GM12878 (cell line): ENCODE measurements at regions of chr14 and their contacts with region 1.

Region 1: GRCh38 chr14:66624299-66624937 is 116.5 kb downstream of the GPHN start:
- DNase-seq: peak; percentile 21
- ATAC-seq: peak; percentile 98
- H3K4me3 ChIP-seq: no peak overlapping the region
- H3K27ac ChIP-seq: no peak overlapping the region
- H3K4me1 ChIP-seq: no peaks in the 10 kb centered on the region
- H3K27me3 ChIP-seq: no peaks in the 10 kb centered on the region
- CTCF ChIP-seq: peak; percentile 64 to 72 (median 67); a peak in 5 of 6 replicates
- EP300 ChIP-seq: no peak
- POLR2A ChIP-seq: no peak
- RAD21 ChIP-seq: peak; percentile 93

Region 2: DNA sequence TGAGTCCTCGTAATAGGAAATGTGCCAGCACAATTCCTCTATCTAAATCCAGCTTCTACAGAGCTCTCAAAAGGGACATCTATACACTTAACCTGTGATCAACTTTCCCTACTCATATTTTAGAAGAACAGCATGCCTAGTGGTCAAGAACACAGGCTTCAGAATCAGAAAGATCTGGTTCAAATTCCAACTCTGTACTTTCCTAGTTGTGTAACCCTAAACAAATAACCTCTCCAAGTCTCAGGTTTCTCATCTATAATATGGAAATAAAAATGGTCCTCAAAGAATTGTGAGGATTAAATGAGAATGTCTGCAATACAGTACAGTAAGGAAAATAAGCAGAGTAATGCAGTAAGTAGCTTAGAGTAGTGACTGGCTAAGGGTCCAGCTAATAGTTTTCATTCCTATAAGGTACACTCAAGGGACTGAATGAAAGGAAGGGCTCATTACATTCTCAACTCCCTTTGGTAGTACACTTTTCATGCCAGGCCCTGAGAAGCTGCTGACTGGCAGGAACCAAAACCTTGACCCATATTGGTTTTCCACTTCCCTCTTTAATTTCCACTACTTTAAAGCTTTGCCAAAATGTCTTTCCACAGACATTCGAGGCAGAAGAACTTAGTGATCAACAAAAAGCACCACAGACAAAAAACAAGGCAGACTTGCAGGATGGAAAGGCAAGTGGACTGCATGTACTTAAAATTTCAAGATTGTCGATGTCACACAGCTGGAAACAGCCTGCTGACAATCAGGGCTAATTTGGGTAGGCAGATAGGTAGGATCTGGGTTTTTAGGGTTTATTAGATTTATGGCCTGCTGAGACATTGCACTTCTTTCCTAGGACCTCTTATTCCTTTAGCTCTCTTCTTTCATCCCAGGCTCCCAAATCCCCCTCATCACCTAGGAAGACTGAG is 134.0 kb before region 1 on chr14:
- CTCF ChIA-PET with region 1: interaction called, 24 read pairs
- POLR2A ChIA-PET with region 1: interaction called, 8 read pairs
- RAD21 ChIA-PET with region 1: interaction called, 10 read pairs
- SMC1A ChIA-PET with region 1: interaction called, 5 read pairs
- in situ Hi-C with region 1: no loop called
- intact Hi-C with region 1: loop called (anchors 2 kb)
- DNase-seq: no peak
- ATAC-seq: no peak
- H3K4me3 ChIP-seq: no peak overlapping the region
- H3K27ac ChIP-seq: no peak overlapping the region
- H3K4me1 ChIP-seq: no peaks in the 10 kb centered on the region
- H3K27me3 ChIP-seq: no peaks in the 10 kb centered on the region
- CTCF ChIP-seq: no peak
- EP300 ChIP-seq: no peak
- POLR2A ChIP-seq: no peak
- RAD21 ChIP-seq: no peak

Region 3: GRCh38 chr14:66507722-66508546 is 116.5 kb before region 1 on chr14 and contains the start of gene GPHN:
- CTCF ChIA-PET with region 1: interaction called, 6 read pairs
- POLR2A ChIA-PET with region 1: no interaction called
- RAD21 ChIA-PET with region 1: interaction called, 10 read pairs
- SMC1A ChIA-PET with region 1: interaction called, 8 read pairs
- in situ Hi-C with region 1: no loop called
- intact Hi-C with region 1: no loop called
- DNase-seq: peak; percentile 95
- ATAC-seq: peak; percentile 91
- H3K4me3 ChIP-seq: peak within 1 kb of the TSS; percentile 95
- H3K27ac ChIP-seq: peak within 1 kb of the TSS; percentile 87
- H3K4me1 ChIP-seq: peaks cover 4% of the 10 kb centered on the region
- H3K27me3 ChIP-seq: no peaks in the 10 kb centered on the region
- CTCF ChIP-seq: peak; percentile 15 to 23 (median 20); a peak in 4 of 6 replicates
- EP300 ChIP-seq: 0 out of 4 replicates have a peak, but pooled peaks of 1 of the 2 experiments have one; percentile 13
- POLR2A ChIP-seq: peak; percentile 95
- RAD21 ChIP-seq: no peak
- polyA plus RNA-seq, gene GPHN: 32.3 to 33.1 TPM

Region 4: DNA sequence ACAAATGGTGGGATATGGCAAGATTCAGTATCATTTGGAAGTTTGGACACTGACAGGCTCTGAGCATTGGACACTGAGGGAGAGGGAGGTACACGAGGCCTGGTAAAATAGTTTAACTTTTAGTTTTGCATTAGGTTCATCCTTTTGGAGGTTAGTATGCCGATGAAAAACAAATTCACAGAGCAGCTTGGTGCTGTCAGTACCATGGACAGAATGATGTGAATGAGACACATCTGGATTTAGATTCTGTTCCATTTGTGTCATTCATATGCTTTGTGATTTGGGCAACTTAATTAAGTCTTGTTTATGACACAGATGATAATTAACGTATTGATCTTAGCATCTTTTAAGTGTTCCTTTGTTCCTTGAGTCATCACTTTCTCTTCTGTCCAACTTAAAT is 82.8 kb before region 1 on chr14:
- CTCF ChIA-PET with region 1: no interaction called
- POLR2A ChIA-PET with region 1: no interaction called
- RAD21 ChIA-PET with region 1: no interaction called
- SMC1A ChIA-PET with region 1: no interaction called
- in situ Hi-C with region 1: no loop called
- intact Hi-C with region 1: no loop called
- DNase-seq: no peak
- ATAC-seq: no peak
- H3K4me3 ChIP-seq: no peak overlapping the region
- H3K27ac ChIP-seq: no peak overlapping the region
- H3K4me1 ChIP-seq: no peaks in the 10 kb centered on the region
- H3K27me3 ChIP-seq: no peaks in the 10 kb centered on the region
- CTCF ChIP-seq: no peak
- EP300 ChIP-seq: no peak
- POLR2A ChIP-seq: no peak
- RAD21 ChIP-seq: no peak

Region 5: GRCh38 chr14:66649498-66649897 is 25.1 kb after region 1 on chr14:
- CTCF ChIA-PET with region 1: interaction called, 11 read pairs
- POLR2A ChIA-PET with region 1: interaction called, 3 read pairs
- RAD21 ChIA-PET with region 1: interaction called, 12 read pairs
- SMC1A ChIA-PET with region 1: interaction called, 17 read pairs
- in situ Hi-C with region 1: no loop called
- intact Hi-C with region 1: no loop called
- DNase-seq: peak; percentile 79
- ATAC-seq: peak; percentile 82
- H3K4me3 ChIP-seq: peak overlapping the region; percentile 54
- H3K27ac ChIP-seq: peak overlapping the region; percentile 96
- H3K4me1 ChIP-seq: peaks cover 36% of the 10 kb centered on the region
- H3K27me3 ChIP-seq: no peaks in the 10 kb centered on the region
- CTCF ChIP-seq: no peak
- EP300 ChIP-seq: peak; percentile 83 to 90
- POLR2A ChIP-seq: no peak
- RAD21 ChIP-seq: no peak

Region 6: GRCh38 chr14:66746316-66747006 is 122.0 kb after region 1 on chr14:
- CTCF ChIA-PET with region 1: interaction called, 47 read pairs
- POLR2A ChIA-PET with region 1: no interaction called
- RAD21 ChIA-PET with region 1: interaction called, 11 read pairs
- SMC1A ChIA-PET with region 1: interaction called, 30 read pairs
- in situ Hi-C with region 1: no loop called
- intact Hi-C with region 1: loop called (anchors 1 kb)
- DNase-seq: no peak
- ATAC-seq: peak; percentile 80
- H3K4me3 ChIP-seq: no peak overlapping the region
- H3K27ac ChIP-seq: no peak overlapping the region
- H3K4me1 ChIP-seq: no peaks in the 10 kb centered on the region
- H3K27me3 ChIP-seq: no peaks in the 10 kb centered on the region
- CTCF ChIP-seq: peak; percentile 40 to 53 (median 43)
- EP300 ChIP-seq: no peak
- POLR2A ChIP-seq: no peak
- RAD21 ChIP-seq: peak; percentile 59

Region 7: GRCh38 chr14:67111022-67111421 is 486.6 kb after region 1 on chr14:
- CTCF ChIA-PET with region 1: interaction called, 13 read pairs
- POLR2A ChIA-PET with region 1: no interaction called
- RAD21 ChIA-PET with region 1: interaction called, 7 read pairs
- SMC1A ChIA-PET with region 1: no interaction called
- in situ Hi-C with region 1: no loop called
- intact Hi-C with region 1: no loop called
- DNase-seq: no peak
- ATAC-seq: no peak
- H3K4me3 ChIP-seq: no peak overlapping the region
- H3K27ac ChIP-seq: no peak overlapping the region
- H3K4me1 ChIP-seq: no peaks in the 10 kb centered on the region
- H3K27me3 ChIP-seq: no peaks in the 10 kb centered on the region
- CTCF ChIP-seq: no peak
- EP300 ChIP-seq: no peak
- POLR2A ChIP-seq: no peak
- RAD21 ChIP-seq: no peak

Region 8: GRCh38 chr14:67285876-67286452 is 661.5 kb after region 1 on chr14:
- CTCF ChIA-PET with region 1: interaction called, 19 read pairs
- POLR2A ChIA-PET with region 1: no interaction called
- RAD21 ChIA-PET with region 1: interaction called, 19 read pairs
- SMC1A ChIA-PET with region 1: interaction called, 17 read pairs
- in situ Hi-C with region 1: no loop called
- intact Hi-C with region 1: loop called (anchors 10 kb)
- DNase-seq: no peak
- ATAC-seq: no peak
- H3K4me3 ChIP-seq: no peak overlapping the region
- H3K27ac ChIP-seq: no peak overlapping the region
- H3K4me1 ChIP-seq: no peaks in the 10 kb centered on the region
- H3K27me3 ChIP-seq: no peaks in the 10 kb centered on the region
- CTCF ChIP-seq: peak in 2 of 3 experiments; percentile 38 to 46; a peak in 2 of 6 replicates
- EP300 ChIP-seq: no peak
- POLR2A ChIP-seq: no peak
- RAD21 ChIP-seq: peak; percentile 60